ENCODE measurements at regions of chr10 and their contacts with region 1.

Region 1: DNA sequence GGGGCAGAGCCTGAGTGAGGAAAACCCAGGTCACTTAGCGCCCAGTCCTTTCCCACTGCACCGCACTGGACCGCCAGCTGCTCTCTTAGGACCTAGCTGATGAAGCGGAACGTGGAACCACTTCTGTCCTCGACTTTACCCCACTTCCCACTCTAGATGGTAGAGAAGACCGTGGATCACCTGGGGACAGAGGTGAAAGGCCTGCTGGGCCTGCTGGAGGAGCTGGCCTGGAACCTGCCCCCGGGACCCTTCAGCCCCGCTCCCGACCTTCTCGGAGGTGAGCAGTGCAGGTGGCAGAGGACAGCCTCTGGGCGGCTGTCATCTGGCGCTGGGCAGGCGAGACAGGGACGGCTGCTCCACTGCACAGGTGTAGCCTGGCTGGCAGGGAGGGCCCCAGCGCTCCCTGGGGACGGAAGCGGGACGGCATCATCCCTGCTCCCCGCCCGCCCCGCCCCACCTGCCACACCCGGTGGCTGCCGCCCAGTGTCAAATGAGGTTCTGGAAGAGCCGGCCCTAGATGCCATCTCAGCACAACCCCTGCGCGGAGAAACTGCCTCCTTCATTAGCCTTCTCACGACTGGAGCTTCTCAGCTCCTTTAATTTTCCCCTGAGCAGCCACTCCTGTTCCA is 11.7 kb downstream of the PLAC9 start:
- DNase-seq: peak; percentile 59
- ATAC-seq: peak; percentile 72
- H3K4me3 ChIP-seq: peak overlapping the region in 4 of 5 experiments; percentile 18 to 55 (median 41)
- H3K4me3 Mint-ChIP-seq: peak overlapping the region; percentile 75
- H3K27ac ChIP-seq: no peak overlapping the region
- H3K27ac Mint-ChIP-seq: peak overlapping the region; percentile 81
- H3K4me1 ChIP-seq: peaks cover 14 to 17% of the 10 kb centered on the region in 2 donors
- H3K4me1 Mint-ChIP-seq: peaks cover 21% of the 10 kb centered on the region
- H3K27me3 ChIP-seq: peaks cover 0 to 2% (median 0%) of the 10 kb centered on the region in 4 experiments
- H3K27me3 Mint-ChIP-seq: peaks cover 21% of the 10 kb centered on the region
- CTCF ChIP-seq: peak; percentile 53

Region 2: DNA sequence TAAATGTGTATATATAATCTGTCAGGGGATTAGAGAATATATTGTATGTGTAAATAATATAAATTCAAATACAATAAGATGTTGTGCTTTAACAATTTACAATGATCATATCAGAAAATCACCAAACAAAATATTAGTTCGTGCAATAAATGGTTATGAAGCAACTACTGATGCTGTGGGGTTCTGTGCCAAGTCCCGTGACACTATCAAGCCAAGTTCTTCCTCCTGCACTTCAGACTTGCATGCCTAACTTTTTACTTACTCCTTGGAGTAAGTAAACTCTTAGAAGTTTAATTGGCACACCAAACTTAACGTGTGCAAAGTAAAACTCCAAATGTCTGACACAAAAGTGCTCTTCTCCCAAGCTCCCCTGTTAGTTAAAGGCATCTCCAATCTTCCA is 92.2 kb before region 1 on chr10:
- CTCF ChIA-PET with region 1: no interaction called
- POLR2A ChIA-PET with region 1: no interaction called
- intact Hi-C with region 1: no loop called
- DNase-seq: no peak
- ATAC-seq: no peak
- H3K4me3 ChIP-seq: no peak overlapping the region
- H3K4me3 Mint-ChIP-seq: no peak overlapping the region
- H3K27ac ChIP-seq: no peak overlapping the region
- H3K27ac Mint-ChIP-seq: no peak overlapping the region
- H3K4me1 ChIP-seq: no peaks in the 10 kb centered on the region
- H3K4me1 Mint-ChIP-seq: no peaks in the 10 kb centered on the region
- H3K27me3 ChIP-seq: peaks cover 0 to 4% (median 0%) of the 10 kb centered on the region in 4 experiments
- H3K27me3 Mint-ChIP-seq: peaks cover 3% of the 10 kb centered on the region
- CTCF ChIP-seq: no peak

Region 3: GRCh38 chr10:80064120-80064886 is 79.9 kb before region 1 on chr10:
- CTCF ChIA-PET with region 1: interaction called, 13 read pairs
- POLR2A ChIA-PET with region 1: no interaction called
- intact Hi-C with region 1: no loop called
- DNase-seq: no peak
- ATAC-seq: no peak
- H3K4me3 ChIP-seq: no peak overlapping the region
- H3K4me3 Mint-ChIP-seq: no peak overlapping the region
- H3K27ac ChIP-seq: no peak overlapping the region
- H3K27ac Mint-ChIP-seq: no peak overlapping the region
- H3K4me1 ChIP-seq: no peaks in the 10 kb centered on the region
- H3K4me1 Mint-ChIP-seq: no peaks in the 10 kb centered on the region
- H3K27me3 ChIP-seq: peaks cover 0 to 3% (median 0%) of the 10 kb centered on the region in 4 experiments
- H3K27me3 Mint-ChIP-seq: peaks cover 4% of the 10 kb centered on the region
- CTCF ChIP-seq: no peak

Region 4: DNA sequence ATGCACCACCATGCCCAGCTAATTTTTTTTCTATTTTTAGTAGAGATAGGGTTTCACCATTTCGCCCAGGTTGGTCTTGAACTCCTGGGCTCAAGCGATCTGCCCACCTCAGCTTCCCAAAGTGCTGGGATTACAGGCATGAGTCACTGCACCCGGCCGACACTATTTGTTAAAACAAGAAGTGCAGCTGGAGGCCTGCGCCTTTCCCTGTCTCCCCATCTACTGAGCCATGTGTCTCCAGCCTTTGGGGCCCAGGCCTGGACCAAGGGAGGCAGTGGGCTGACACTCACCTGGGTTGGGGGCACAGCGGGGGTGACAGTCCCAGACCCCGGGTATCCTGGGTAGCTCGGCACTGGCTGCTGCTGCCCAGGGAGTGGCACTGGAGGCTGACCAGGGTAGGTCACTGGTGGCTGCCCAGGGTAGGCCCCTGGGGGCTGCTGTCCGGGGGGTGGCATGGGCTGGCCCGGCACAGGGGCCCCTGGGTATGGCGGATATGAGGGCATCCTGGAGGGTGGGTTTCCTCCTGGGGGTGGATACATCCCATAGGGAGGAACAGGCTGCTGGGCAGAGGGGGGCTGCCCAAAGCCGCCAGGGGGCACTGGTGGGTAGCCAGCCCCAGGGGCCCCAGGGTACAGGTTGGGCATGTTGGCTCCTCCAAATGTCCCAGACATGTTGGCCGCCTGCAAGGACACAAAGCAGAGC is 24.6 kb after region 1 on chr10:
- CTCF ChIA-PET with region 1: interaction called, 11 read pairs
- POLR2A ChIA-PET with region 1: interaction called, 3 read pairs
- intact Hi-C with region 1: no loop called
- DNase-seq: peak; percentile 30
- ATAC-seq: peak; percentile 56
- H3K4me3 ChIP-seq: no peak overlapping the region
- H3K4me3 Mint-ChIP-seq: no peak overlapping the region
- H3K27ac ChIP-seq: no peak overlapping the region
- H3K27ac Mint-ChIP-seq: no peak overlapping the region
- H3K4me1 ChIP-seq: no peaks in the 10 kb centered on the region
- H3K4me1 Mint-ChIP-seq: peaks cover 3% of the 10 kb centered on the region
- H3K27me3 ChIP-seq: no peaks in the 10 kb centered on the region
- H3K27me3 Mint-ChIP-seq: no peaks in the 10 kb centered on the region
- CTCF ChIP-seq: peak; percentile 35

Region 5: DNA sequence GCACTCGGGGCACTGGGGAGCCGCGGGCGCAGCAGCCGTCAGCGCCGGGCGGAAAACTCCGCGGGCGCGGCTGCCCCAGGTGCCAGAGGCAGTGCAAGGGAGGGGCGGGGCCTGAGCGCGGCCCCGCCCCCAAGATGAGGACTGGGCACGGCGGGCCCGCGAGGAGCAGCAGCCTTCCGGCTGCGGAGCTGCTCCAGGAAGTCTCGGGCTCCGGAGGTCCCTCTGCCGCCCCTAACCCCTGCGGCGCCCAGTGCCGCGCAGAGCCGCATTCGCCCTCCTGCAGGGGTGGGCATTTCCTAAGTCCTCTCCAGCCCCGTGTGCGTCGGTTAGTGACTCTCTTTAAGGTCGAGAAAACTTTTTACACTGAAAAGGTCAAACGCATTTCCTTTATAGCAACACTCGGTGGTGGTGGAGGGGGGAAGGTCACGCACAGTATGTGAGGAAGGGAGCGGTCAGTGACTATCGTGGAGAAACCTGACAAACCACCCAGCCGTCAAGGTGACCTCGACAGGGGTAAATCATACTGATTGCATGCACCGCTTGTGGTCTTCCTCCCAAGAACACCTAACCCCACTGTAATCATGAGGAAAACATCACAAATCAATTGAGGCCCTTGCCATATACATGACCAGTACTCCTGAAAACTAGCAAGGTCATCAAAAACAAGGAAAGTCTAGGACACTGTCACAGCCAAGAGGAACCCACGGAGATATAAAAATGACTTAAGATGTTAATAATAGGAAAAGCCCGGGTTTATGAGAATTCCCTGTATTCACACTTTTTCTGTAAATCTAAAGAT is 61.5 kb after region 1 on chr10 and contains the start of gene ANXA11:
- CTCF ChIA-PET with region 1: interaction called, 26 read pairs
- POLR2A ChIA-PET with region 1: interaction called, 6 read pairs
- intact Hi-C with region 1: loop called (anchors 5 kb)
- DNase-seq: peak; percentile 90
- ATAC-seq: peak; percentile 87
- H3K4me3 ChIP-seq: peak within 1 kb of the TSS; percentile 53 to 90 (median 74)
- H3K4me3 Mint-ChIP-seq: peak within 1 kb of the TSS; percentile 94
- H3K27ac ChIP-seq: peak within 1 kb of the TSS; percentile 75 to 91
- H3K27ac Mint-ChIP-seq: peak within 1 kb of the TSS; percentile 97
- H3K4me1 ChIP-seq: peaks cover 41 to 50% of the 10 kb centered on the region in 2 donors
- H3K4me1 Mint-ChIP-seq: peaks cover 50% of the 10 kb centered on the region
- H3K27me3 ChIP-seq: peaks cover 0 to 2% (median 0%) of the 10 kb centered on the region in 4 experiments
- H3K27me3 Mint-ChIP-seq: no peaks in the 10 kb centered on the region
- CTCF ChIP-seq: no peak
- total RNA-seq, gene ANXA11: 156 and 177 TPM in 2 replicates

Region 6: DNA sequence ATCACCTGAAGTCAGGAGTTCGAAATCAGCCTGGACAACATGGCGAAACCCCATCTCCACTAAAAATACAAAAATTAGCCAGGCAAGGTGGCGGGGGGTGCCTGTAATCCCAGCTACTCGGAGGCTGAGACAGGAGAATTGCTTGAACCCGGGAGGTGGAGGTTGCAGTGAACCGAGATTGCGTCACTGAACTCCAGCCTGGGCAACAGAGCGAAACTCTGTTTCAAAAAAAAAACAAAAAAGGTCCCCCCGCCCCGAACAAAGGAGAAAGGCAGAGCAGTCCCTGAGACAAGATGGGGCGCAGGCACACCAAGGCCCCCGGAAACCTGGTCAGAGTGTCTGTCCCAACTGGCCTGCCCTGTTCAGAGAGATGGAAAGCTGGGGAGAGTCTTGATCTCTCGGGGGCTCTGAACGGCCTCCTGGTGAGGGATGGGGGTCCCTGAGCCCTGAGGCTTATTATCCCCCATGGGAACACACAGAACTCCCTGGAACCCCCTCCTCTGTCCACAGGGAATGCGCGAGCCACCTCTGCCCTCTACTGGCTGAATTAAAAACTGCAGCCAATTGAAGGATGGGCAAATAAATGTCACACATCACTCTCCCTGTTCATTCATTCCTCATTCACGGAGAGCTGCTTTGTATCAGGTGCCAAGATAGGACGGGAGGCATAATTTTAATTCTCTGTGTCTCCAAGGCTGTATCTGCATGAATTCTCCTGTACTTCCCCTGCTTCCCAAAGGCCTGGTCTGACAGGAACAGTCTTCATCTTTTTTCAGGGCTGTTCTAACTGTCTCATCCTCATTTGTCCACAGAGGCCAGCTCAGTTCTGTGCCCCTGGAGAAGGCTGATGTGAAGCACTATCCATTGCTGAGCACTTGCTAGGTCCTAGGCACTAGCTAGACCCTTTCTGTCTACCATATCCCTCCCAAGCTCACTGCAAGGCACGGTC is 116.4 kb after region 1 on chr10:
- CTCF ChIA-PET with region 1: interaction called, 27 read pairs
- POLR2A ChIA-PET with region 1: interaction called, 3 read pairs
- intact Hi-C with region 1: no loop called
- DNase-seq: peak; percentile 50
- ATAC-seq: no peak
- H3K4me3 ChIP-seq: no peak overlapping the region
- H3K4me3 Mint-ChIP-seq: no peak overlapping the region
- H3K27ac ChIP-seq: no peak overlapping the region
- H3K27ac Mint-ChIP-seq: no peak overlapping the region
- H3K4me1 ChIP-seq: no peaks in the 10 kb centered on the region
- H3K4me1 Mint-ChIP-seq: no peaks in the 10 kb centered on the region
- H3K27me3 ChIP-seq: peaks cover 0 to 2% (median 0%) of the 10 kb centered on the region in 4 experiments
- H3K27me3 Mint-ChIP-seq: peaks cover 7% of the 10 kb centered on the region
- CTCF ChIP-seq: peak; percentile 83

Region 7: GRCh38 chr10:81428456-81429134 is 1284.4 kb after region 1 on chr10:
- CTCF ChIA-PET with region 1: no interaction called
- POLR2A ChIA-PET with region 1: no interaction called
- intact Hi-C with region 1: no loop called
- DNase-seq: no peak
- ATAC-seq: no peak
- H3K4me3 ChIP-seq: no peak overlapping the region
- H3K4me3 Mint-ChIP-seq: no peak overlapping the region
- H3K27ac ChIP-seq: no peak overlapping the region
- H3K27ac Mint-ChIP-seq: no peak overlapping the region
- H3K4me1 ChIP-seq: no peaks in the 10 kb centered on the region
- H3K4me1 Mint-ChIP-seq: no peaks in the 10 kb centered on the region
- H3K27me3 ChIP-seq: no peaks in the 10 kb centered on the region
- H3K27me3 Mint-ChIP-seq: no peaks in the 10 kb centered on the region
- CTCF ChIP-seq: no peak

Measured in B cell (primary cell).